Natural killer cell (primary cell): ENCODE measurements at regions of chr11 and their contacts with region 1.

Region 1: DNA sequence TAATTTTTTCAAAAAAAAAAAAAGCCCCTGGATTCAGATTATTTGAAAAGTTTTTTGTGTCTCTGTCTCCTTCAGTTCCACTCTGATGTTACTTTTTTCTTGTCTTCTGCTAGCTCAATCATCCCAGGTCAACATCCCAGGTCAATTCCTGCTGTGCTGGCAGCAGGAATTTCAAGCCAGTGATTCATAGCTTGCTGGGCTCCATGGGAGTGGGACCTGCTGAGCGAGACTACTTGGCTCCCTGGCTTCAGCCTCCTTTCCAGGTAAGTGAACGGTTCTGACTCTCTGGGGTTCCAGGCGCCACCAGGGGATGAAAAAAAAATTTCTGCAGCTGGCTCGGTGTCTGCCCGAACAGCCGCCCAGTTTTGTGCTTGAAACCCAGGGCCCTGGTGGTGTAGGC is 31.4 kb downstream of the PLAAT5 start:
- DNase-seq: no peak
- ATAC-seq: no peak
- H3K4me3 ChIP-seq: no peak overlapping the region
- H3K4me3 Mint-ChIP-seq: no peak overlapping the region
- H3K27ac ChIP-seq: no peak overlapping the region
- H3K27ac Mint-ChIP-seq: no peak overlapping the region
- H3K4me1 ChIP-seq: no peaks in the 10 kb centered on the region
- H3K4me1 Mint-ChIP-seq: no peaks in the 10 kb centered on the region
- H3K27me3 ChIP-seq: no peaks in the 10 kb centered on the region
- H3K27me3 Mint-ChIP-seq: peaks cover 0 to 13% of the 10 kb centered on the region in 2 donors
- CTCF ChIP-seq: no peak

Region 2: DNA sequence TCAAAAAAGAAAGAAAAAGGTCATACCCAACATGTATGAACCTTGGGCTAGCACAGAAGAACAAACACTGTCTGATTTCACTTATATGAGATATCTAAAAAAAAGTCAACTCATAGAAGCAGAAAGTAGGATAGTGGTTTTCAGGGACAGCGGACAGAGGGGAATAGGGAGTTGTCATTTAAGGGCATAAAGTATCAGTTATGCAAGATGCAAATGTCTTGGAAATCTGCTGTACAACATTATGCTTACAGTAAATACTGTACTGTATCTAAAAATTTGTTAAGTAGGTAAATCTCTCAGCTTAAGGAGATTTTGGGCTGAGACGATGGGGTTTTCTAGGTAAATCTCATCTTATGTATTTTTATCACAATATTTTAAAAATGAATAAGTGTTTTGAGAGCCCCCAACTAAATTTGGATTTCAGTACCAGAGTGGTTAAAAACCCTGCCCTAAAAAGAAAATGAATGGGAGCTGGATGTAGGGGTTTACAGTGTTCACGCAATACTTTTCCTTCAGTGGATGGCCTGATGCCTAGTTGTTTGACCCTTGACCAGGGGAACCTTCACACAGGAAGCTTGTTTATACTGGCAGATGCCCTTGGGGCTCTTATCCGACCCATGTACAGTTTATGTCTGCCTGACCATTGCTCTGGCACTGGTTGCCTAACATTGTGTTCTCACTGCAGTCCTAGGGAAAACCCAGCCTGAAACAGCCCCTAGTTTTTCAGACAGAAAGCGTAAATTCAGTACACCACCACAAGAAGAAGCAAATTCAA is 55.2 kb before region 1 on chr11:
- intact Hi-C with region 1: loop called (anchors 10 kb)
- DNase-seq: no peak
- ATAC-seq: no peak
- H3K4me3 ChIP-seq: no peak overlapping the region
- H3K4me3 Mint-ChIP-seq: no peak overlapping the region
- H3K27ac ChIP-seq: no peak overlapping the region
- H3K27ac Mint-ChIP-seq: no peak overlapping the region
- H3K4me1 ChIP-seq: no peaks in the 10 kb centered on the region
- H3K4me1 Mint-ChIP-seq: no peaks in the 10 kb centered on the region
- H3K27me3 ChIP-seq: no peaks in the 10 kb centered on the region
- H3K27me3 Mint-ChIP-seq: peaks cover 16 to 60% of the 10 kb centered on the region in 2 donors
- CTCF ChIP-seq: no peak

Region 3: GRCh38 chr11:63490551-63491239 is 31.1 kb after region 1 on chr11 and contains the start of gene PLAAT5:
- intact Hi-C with region 1: no loop called
- DNase-seq: peak in 1 of 2 donors; percentile 35
- ATAC-seq: peak; percentile 70 to 86 (median 83)
- H3K4me3 ChIP-seq: no peak within 1 kb of the TSS
- H3K4me3 Mint-ChIP-seq: peak within 1 kb of the TSS; percentile 90
- H3K27ac ChIP-seq: no peak within 1 kb of the TSS
- H3K27ac Mint-ChIP-seq: peak within 1 kb of the TSS in 1 of 2 donors; percentile 78
- H3K4me1 ChIP-seq: peaks cover 5% of the 10 kb centered on the region
- H3K4me1 Mint-ChIP-seq: peaks cover 14 to 25% of the 10 kb centered on the region in 2 donors
- H3K27me3 ChIP-seq: peaks cover 8% of the 10 kb centered on the region
- H3K27me3 Mint-ChIP-seq: peaks cover 14 to 26% of the 10 kb centered on the region in 2 donors
- CTCF ChIP-seq: no peak
- total RNA-seq, gene PLAAT5: 0.59 to 3.0 (median 0.95) TPM

Region 4: DNA sequence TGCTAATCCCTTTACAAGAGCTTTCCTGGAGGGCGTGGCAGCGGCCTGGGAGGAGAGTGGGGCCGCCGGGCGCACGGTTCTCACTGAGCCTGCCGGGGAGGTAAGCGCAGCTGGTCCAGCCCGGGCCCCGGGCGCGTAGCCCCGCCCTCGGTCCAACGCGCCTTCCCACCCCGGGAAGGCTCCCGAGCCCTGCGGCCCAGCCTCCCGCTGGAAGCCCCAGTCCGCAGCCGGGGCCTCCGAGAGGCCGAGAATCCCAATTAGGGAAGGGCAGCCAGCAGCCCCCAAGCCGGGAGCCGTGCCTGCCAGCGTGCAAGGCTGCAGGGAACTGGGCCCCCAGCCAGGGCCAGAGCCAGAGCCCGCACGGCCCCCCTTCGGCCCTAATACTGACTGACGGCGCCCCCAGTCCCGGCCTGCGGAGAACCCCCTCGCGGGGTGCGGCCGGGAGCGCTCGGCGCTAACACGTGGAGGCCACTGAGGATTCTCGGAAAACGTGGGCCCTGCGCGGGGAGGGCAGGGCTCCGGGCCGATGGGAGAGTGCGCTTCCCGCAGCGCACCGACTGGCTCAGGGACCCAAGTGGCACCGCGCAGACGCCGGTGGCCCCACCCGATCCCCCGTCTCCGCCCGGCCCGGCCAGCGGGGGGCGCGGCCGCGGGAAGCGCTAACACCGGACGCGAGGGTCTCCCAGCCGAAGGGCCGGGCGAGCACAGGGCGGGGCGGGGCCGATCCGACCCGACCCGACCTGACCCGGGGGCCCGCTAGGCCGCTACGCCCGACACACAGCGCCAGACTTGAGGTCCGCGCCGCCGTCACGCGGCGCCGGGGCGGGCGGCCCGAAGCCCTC is 303.3 kb after region 1 on chr11:
- intact Hi-C with region 1: no loop called
- DNase-seq: no peak
- ATAC-seq: no peak
- H3K4me3 ChIP-seq: no peak overlapping the region
- H3K4me3 Mint-ChIP-seq: no peak overlapping the region
- H3K27ac ChIP-seq: no peak overlapping the region
- H3K27ac Mint-ChIP-seq: no peak overlapping the region
- H3K4me1 ChIP-seq: peaks cover 11% of the 10 kb centered on the region
- H3K4me1 Mint-ChIP-seq: peaks cover 7 to 8% of the 10 kb centered on the region in 2 donors
- H3K27me3 ChIP-seq: no peaks in the 10 kb centered on the region
- H3K27me3 Mint-ChIP-seq: peaks cover 0 to 2% of the 10 kb centered on the region in 2 donors
- CTCF ChIP-seq: no peak

Region 5: GRCh38 chr11:63916837-63917691 is 457.5 kb after region 1 on chr11 and contains the start of gene RCOR2:
- intact Hi-C with region 1: no loop called
- DNase-seq: peak; percentile 45 to 78
- ATAC-seq: peak; percentile 60 to 73 (median 71)
- H3K4me3 ChIP-seq: peak within 1 kb of the TSS; percentile 39
- H3K4me3 Mint-ChIP-seq: peak within 1 kb of the TSS; percentile 91
- H3K27ac ChIP-seq: no peak within 1 kb of the TSS
- H3K27ac Mint-ChIP-seq: peak within 1 kb of the TSS in 1 of 2 donors; percentile 58
- H3K4me1 ChIP-seq: peaks cover 38% of the 10 kb centered on the region
- H3K4me1 Mint-ChIP-seq: peaks cover 0 to 32% of the 10 kb centered on the region in 2 donors
- H3K27me3 ChIP-seq: peaks cover 7% of the 10 kb centered on the region
- H3K27me3 Mint-ChIP-seq: peaks cover 0 to 5% of the 10 kb centered on the region in 2 donors
- CTCF ChIP-seq: no peak
- total RNA-seq, gene RCOR2: not detected